Gastrocnemius medialis (tissue), 4 donors: ENCODE measurements at regions of chr12 and their contacts with region 1.

Region 1: DNA sequence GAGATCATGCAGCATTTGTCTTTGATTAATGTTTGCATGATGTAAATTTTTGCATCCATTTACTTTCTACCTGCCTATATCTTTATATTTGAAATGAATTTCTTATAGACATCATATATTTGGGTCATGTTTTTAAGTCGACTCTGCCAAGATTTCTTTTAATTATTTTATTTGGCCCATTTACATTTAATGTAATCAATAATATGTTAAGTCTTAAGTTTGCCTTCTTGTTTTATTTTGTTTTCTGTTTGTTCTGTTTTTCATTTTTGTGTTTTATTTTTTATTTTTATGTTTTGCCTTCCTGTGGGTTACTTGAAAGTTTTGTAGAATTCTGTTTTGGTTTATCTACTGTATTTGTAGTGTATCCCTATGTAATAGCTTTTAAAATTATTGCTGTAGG is 33.2 kb upstream of the GUCY2C start:
- DNase-seq: no peak
- ATAC-seq: no peak
- H3K4me3 ChIP-seq: no peak overlapping the region
- H3K27ac ChIP-seq: no peak overlapping the region
- H3K4me1 ChIP-seq: no peaks in the 10 kb centered on the region
- H3K27me3 ChIP-seq: peaks cover 0 to 4% (median 0%) of the 10 kb centered on the region in 3 donors
- CTCF ChIP-seq: no peak
- POLR2A ChIP-seq: no peak

Region 2: DNA sequence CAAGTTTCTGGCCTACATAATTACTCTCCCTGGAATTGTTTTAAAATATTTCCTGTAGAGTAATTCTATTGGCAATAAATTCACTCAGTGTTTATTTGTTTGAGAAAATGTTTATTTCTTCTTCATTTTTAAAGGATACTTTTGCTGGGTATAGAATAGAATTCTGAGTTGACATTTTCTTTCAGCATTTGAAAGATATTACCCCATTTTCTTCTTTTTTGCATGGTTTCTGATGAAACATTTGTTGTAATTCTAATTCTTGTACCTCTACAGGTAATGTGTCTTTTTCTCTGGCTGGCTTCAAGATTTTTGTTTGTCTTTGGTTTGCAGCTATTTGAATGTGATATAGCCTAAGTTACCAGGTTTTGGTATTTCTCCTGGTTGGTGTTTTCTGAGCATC is 389.2 kb before region 1 on chr12:
- in situ Hi-C with region 1: no loop called
- intact Hi-C with region 1: no loop called
- DNase-seq: no peak
- ATAC-seq: no peak
- H3K4me3 ChIP-seq: no peak overlapping the region
- H3K27ac ChIP-seq: no peak overlapping the region
- H3K4me1 ChIP-seq: no peaks in the 10 kb centered on the region
- H3K27me3 ChIP-seq: no peaks in the 10 kb centered on the region
- CTCF ChIP-seq: no peak
- POLR2A ChIP-seq: no peak

Region 3: GRCh38 chr12:14952299-14952921 is 222.8 kb after region 1 on chr12:
- in situ Hi-C with region 1: no loop called
- intact Hi-C with region 1: no loop called
- DNase-seq: no peak
- ATAC-seq: peak; percentile 63 to 68
- H3K4me3 ChIP-seq: no peak overlapping the region
- H3K27ac ChIP-seq: peak overlapping the region; percentile 59 to 72 (median 68)
- H3K4me1 ChIP-seq: peaks cover 7 to 24% of the 10 kb centered on the region in 2 donors
- H3K27me3 ChIP-seq: no peaks in the 10 kb centered on the region
- CTCF ChIP-seq: no peak
- POLR2A ChIP-seq: no peak

Region 4: DNA sequence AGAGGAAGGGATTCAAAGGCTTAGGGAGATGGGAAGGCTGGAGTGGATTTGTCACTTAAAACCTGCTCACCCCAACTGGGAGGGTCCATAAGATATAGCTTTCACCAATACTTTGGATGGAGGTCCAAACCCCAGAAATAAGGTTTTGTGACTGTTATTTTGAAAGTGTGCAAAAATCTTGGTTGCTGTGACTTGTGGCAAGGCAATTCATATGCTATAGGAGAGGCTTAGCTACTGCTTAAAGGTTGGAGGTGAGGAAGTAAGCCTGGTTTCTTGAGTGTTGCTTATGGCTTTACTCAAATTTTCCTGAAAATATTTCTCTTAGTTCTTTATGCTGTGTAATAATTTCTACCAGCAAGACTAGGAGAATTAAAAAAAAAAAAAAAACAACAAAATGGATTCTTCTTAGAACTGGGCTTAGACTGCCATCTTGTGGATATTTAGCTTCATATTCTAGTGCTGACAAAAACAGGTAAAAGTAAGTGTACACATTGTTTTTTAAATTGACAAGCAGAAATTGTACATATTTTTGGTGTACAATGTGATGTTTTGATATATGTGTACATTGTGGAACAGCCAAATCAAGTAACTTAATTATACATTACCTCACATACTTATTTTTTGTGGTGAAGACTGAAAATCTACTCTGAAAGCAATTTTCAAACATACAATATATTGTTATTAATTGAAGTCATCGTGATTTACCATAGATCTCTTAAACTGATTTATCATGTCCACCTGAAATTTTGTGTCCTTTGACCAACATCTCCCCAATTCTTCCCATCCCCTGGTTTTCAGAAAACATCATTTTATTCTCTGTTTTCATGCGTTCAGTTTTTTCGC is 266.2 kb after region 1 on chr12:
- in situ Hi-C with region 1: no loop called
- intact Hi-C with region 1: loop called (anchors 5 kb)
- DNase-seq: no peak
- ATAC-seq: no peak
- H3K4me3 ChIP-seq: no peak overlapping the region
- H3K27ac ChIP-seq: no peak overlapping the region
- H3K4me1 ChIP-seq: peaks cover 3 to 8% of the 10 kb centered on the region in 2 donors
- H3K27me3 ChIP-seq: no peaks in the 10 kb centered on the region
- CTCF ChIP-seq: peak; percentile 32 to 73 (median 57)
- POLR2A ChIP-seq: no peak